IMR-90 (cell line): ENCODE measurements at regions of chr4 and their contacts with region 1.

Region 1: GRCh38 chr4:181319629-181320028 is 923.6 kb upstream of the TENM3 start:
- DNase-seq: no peak
- ATAC-seq: no peak
- H3K4me3 ChIP-seq: no peak overlapping the region
- H3K27ac ChIP-seq: no peak overlapping the region
- H3K4me1 ChIP-seq: no peaks in the 10 kb centered on the region
- H3K27me3 ChIP-seq: no peaks in the 10 kb centered on the region
- CTCF ChIP-seq: no peak
- POLR2A ChIP-seq: no peak
- RAD21 ChIP-seq: no peak

Region 2: GRCh38 chr4:180805101-180805500 is 514.5 kb before region 1 on chr4:
- CTCF ChIA-PET with region 1: no interaction called
- POLR2A ChIA-PET with region 1: interaction called, 13 read pairs
- dilution Hi-C with region 1: no loop called
- in situ Hi-C with region 1: no loop called
- intact Hi-C with region 1: no loop called
- DNase-seq: no peak
- ATAC-seq: no peak
- H3K4me3 ChIP-seq: no peak overlapping the region
- H3K27ac ChIP-seq: no peak overlapping the region
- H3K4me1 ChIP-seq: no peaks in the 10 kb centered on the region
- H3K27me3 ChIP-seq: no peaks in the 10 kb centered on the region
- CTCF ChIP-seq: no peak
- POLR2A ChIP-seq: no peak
- RAD21 ChIP-seq: no peak

Region 3: DNA sequence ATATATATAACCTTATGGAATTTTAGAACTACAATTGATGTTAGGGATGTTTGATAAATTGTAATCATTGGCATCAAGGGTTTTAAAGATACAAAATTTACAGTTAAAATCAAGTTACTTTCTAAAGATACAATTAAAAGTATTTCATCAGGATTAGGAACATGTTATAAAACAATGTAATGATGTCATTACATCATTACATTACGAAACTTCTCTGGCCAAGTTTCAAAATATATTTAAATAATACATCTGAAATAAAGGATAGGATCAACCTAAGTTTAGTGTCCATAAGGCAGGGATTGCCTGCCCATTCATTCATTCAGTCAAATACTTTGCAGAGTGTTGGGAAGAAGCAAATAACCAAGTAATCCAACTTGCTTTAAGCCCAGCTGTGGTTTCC is 998.6 kb after region 1 on chr4:
- CTCF ChIA-PET with region 1: no interaction called
- POLR2A ChIA-PET with region 1: no interaction called
- dilution Hi-C with region 1: no loop called
- in situ Hi-C with region 1: no loop called
- intact Hi-C with region 1: no loop called
- DNase-seq: peak; percentile 41
- ATAC-seq: no peak
- H3K4me3 ChIP-seq: no peak overlapping the region
- H3K27ac ChIP-seq: no peak overlapping the region
- H3K4me1 ChIP-seq: no peaks in the 10 kb centered on the region
- H3K27me3 ChIP-seq: no peaks in the 10 kb centered on the region
- CTCF ChIP-seq: no peak
- POLR2A ChIP-seq: no peak
- RAD21 ChIP-seq: no peak